ENCODE measurements at regions of chr20 and their contacts with region 1.

Region 1: GRCh38 chr20:24469116-24469893 is at the start of gene SYNDIG1:
- DNase-seq: peak; percentile 20
- H3K4me3 ChIP-seq: peak within 1 kb of the TSS; percentile 37 to 51 (median 48)
- H3K27ac ChIP-seq: no peak within 1 kb of the TSS
- H3K4me1 ChIP-seq: no peaks in the 10 kb centered on the region
- H3K27me3 ChIP-seq: no peaks in the 10 kb centered on the region
- CTCF ChIP-seq: no peak
- total RNA-seq, gene SYNDIG1: 5.7 to 17.5 TPM

Region 2: GRCh38 chr20:24134284-24134683 is 335.0 kb before region 1 on chr20:
- CTCF ChIA-PET with region 1: no interaction called
- dilution Hi-C with region 1: no loop called
- in situ Hi-C with region 1: no loop called
- intact Hi-C with region 1: no loop called
- DNase-seq: peak; percentile 30
- H3K4me3 ChIP-seq: no peak overlapping the region
- H3K27ac ChIP-seq: no peak overlapping the region
- H3K4me1 ChIP-seq: peaks cover 25% of the 10 kb centered on the region
- H3K27me3 ChIP-seq: no peaks in the 10 kb centered on the region
- CTCF ChIP-seq: no peak

Region 3: DNA sequence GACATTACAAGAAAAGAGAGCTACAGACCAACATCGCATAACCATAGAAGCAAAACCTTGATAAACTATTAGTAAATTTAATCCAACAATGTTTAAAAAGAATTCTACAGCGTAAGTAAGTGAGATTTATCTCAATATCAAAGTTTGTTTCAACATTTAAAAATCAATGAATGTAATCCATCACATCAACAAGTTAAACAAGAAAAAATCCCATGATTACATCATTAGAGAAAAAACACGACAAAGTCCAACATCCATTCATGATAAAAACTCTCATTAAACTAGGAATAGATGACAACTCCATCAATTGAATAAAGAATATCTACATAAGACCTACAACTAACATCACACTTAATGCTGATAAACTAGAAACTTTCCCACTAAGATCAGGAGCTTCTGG is 241.7 kb before region 1 on chr20:
- CTCF ChIA-PET with region 1: no interaction called
- dilution Hi-C with region 1: no loop called
- in situ Hi-C with region 1: no loop called
- intact Hi-C with region 1: no loop called
- DNase-seq: no peak
- H3K4me3 ChIP-seq: no peak overlapping the region
- H3K27ac ChIP-seq: no peak overlapping the region
- H3K4me1 ChIP-seq: no peaks in the 10 kb centered on the region
- H3K27me3 ChIP-seq: no peaks in the 10 kb centered on the region
- CTCF ChIP-seq: no peak

Region 4: GRCh38 chr20:24303381-24303780 is 165.9 kb before region 1 on chr20:
- CTCF ChIA-PET with region 1: no interaction called
- dilution Hi-C with region 1: no loop called
- in situ Hi-C with region 1: no loop called
- intact Hi-C with region 1: loop called (anchors 5 kb)
- DNase-seq: no peak
- H3K4me3 ChIP-seq: no peak overlapping the region
- H3K27ac ChIP-seq: no peak overlapping the region
- H3K4me1 ChIP-seq: no peaks in the 10 kb centered on the region
- H3K27me3 ChIP-seq: no peaks in the 10 kb centered on the region
- CTCF ChIP-seq: peak in 1 of 2 donors; percentile 24

Region 5: GRCh38 chr20:24507182-24507853 is 38.0 kb after region 1 on chr20:
- CTCF ChIA-PET with region 1: no interaction called
- dilution Hi-C with region 1: no loop called
- in situ Hi-C with region 1: no loop called
- intact Hi-C with region 1: loop called (anchors 5 kb)
- DNase-seq: peak; percentile 85
- H3K4me3 ChIP-seq: peak overlapping the region in 1 of 3 experiments; percentile 3
- H3K27ac ChIP-seq: peak overlapping the region; percentile 39
- H3K4me1 ChIP-seq: peaks cover 16% of the 10 kb centered on the region
- H3K27me3 ChIP-seq: no peaks in the 10 kb centered on the region
- CTCF ChIP-seq: no peak

Region 6: DNA sequence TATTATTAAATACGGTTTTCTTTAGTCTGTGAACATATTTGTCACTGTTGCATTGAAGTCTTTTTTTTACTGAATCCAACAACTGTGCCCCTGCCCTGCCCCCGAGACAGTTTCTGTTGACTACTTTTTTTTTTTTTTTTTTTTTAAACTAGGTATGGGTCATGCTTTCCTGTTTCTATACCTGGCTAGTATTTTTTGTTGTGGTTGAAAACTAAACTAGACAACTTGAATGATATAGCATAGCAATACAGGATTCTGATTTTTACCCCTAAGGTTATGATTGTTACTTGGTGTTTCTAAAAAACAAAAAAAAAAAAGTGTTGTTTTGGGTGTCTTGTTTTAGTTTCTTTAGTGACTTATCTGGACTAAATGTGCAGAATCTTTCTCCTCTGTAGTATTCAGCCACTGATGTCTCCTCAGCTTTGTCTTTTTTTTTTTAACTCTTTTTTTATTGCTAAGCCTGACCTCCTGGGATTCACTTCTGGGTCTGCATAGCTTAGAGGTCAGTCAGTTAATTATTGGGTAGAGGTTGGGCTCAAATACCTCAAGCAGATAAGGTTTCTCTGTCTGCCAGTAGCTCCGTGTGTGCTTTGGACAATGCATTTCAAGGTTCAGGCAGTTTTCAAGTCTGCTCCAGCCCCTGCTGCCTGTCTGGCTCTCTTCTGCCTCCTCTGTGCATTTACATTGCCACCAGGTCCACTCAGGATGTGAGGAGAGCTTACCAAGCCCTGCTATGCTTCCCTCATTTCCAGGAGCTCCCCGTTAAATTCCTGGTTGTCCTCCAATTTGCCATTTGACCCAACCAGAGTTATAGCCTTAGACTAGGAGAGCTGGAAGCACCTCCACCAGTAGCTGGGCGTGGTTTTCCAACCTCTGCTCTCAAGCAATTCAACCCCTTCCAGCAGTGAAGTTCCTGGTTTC is 91.5 kb after region 1 on chr20:
- CTCF ChIA-PET with region 1: no interaction called
- dilution Hi-C with region 1: no loop called
- in situ Hi-C with region 1: no loop called
- intact Hi-C with region 1: loop called (anchors 10 kb)
- DNase-seq: peak; percentile 11
- H3K4me3 ChIP-seq: no peak overlapping the region
- H3K27ac ChIP-seq: no peak overlapping the region
- H3K4me1 ChIP-seq: no peaks in the 10 kb centered on the region
- H3K27me3 ChIP-seq: no peaks in the 10 kb centered on the region
- CTCF ChIP-seq: no peak

Region 7: DNA sequence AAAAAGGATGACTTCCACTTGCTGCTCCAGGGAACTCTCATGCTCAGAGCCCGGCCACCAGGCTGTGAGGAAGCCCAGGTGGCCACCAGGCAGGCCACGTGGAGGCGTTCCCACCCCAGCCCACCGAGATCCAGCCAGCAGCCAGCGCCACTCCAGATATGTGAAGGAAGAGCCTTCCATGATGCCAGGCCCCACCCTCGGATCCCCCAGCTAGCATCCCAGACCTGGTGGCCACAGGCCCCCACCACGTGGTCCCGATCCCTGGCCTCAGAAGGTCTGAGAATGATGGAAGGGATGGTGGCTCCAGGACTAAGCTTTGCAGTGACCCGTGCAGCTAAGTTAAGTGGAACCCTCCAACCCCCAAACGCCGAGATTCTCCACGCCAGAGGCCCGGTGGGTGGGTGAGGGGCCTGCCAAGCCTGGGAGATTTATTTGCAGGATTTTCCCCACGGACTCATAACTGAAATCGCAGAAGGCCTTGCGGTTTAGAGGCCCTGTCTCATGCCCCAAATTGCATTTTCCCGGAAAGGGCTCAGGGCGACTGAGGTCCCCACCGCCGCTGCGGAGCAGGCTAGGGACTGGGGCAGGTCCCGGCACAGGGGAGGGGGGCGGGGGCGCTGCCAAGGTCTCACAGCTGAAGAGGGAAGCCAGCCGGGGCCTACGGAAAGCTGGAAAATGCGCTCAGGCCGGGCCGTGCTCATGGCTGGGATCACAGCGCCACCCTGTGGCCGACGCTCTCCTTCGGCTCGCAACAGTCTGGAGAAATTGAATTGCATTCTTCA is 448.7 kb after region 1 on chr20:
- CTCF ChIA-PET with region 1: no interaction called
- dilution Hi-C with region 1: no loop called
- in situ Hi-C with region 1: no loop called
- intact Hi-C with region 1: loop called (anchors 5 kb)
- DNase-seq: peak; percentile 33
- H3K4me3 ChIP-seq: no peak overlapping the region
- H3K27ac ChIP-seq: no peak overlapping the region
- H3K4me1 ChIP-seq: no peaks in the 10 kb centered on the region
- H3K27me3 ChIP-seq: no peaks in the 10 kb centered on the region
- CTCF ChIP-seq: peak; percentile 75 to 88